Aorta (tissue), 5 donors: ENCODE measurements at regions of chr9 and their contacts with region 1.

Region 1: GRCh38 chr9:119179701-119180100 is 189.5 kb downstream of the BRINP1 start:
- DNase-seq: no peak
- ATAC-seq: no peak
- H3K4me3 ChIP-seq: no peak overlapping the region
- H3K27ac ChIP-seq: no peak overlapping the region
- H3K4me1 ChIP-seq: peaks cover 0 to 1% of the 10 kb centered on the region in 2 donors
- H3K27me3 ChIP-seq: peaks cover 0 to 1% of the 10 kb centered on the region in 2 donors

Region 2: GRCh38 chr9:119126040-119126439 is 53.7 kb before region 1 on chr9:
- intact Hi-C with region 1: loop called in 1 of 2 experiments (anchors 10 kb)
- DNase-seq: no peak
- ATAC-seq: no peak
- H3K4me3 ChIP-seq: no peak overlapping the region
- H3K27ac ChIP-seq: no peak overlapping the region
- H3K4me1 ChIP-seq: no peaks in the 10 kb centered on the region
- H3K27me3 ChIP-seq: no peaks in the 10 kb centered on the region

Region 3: DNA sequence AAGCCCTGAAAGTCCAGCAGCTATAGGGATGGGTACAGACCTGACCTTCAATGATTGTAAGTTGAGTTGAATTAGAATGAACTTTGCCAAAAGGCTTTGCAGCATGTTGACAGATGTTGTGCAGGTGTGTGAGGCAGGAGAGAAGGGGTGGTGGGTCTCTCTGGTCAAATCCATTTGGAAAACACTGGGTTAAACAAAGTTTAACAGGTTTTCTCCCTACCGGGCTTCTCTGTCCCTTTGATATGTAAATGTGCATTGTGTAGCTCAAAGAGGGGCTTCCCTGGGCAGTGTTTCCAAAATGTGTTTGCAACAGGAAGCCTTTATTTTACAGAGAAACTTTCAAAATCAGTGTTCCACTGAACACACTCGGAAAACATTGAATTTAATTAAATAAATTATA is 261.6 kb after region 1 on chr9:
- intact Hi-C with region 1: no loop called
- DNase-seq: no peak
- ATAC-seq: no peak
- H3K4me3 ChIP-seq: no peak overlapping the region
- H3K27ac ChIP-seq: no peak overlapping the region
- H3K4me1 ChIP-seq: peaks cover 0 to 2% of the 10 kb centered on the region in 2 donors
- H3K27me3 ChIP-seq: no peaks in the 10 kb centered on the region